ENCODE measurements at regions of chr19 and their contacts with region 1.

Region 1: DNA sequence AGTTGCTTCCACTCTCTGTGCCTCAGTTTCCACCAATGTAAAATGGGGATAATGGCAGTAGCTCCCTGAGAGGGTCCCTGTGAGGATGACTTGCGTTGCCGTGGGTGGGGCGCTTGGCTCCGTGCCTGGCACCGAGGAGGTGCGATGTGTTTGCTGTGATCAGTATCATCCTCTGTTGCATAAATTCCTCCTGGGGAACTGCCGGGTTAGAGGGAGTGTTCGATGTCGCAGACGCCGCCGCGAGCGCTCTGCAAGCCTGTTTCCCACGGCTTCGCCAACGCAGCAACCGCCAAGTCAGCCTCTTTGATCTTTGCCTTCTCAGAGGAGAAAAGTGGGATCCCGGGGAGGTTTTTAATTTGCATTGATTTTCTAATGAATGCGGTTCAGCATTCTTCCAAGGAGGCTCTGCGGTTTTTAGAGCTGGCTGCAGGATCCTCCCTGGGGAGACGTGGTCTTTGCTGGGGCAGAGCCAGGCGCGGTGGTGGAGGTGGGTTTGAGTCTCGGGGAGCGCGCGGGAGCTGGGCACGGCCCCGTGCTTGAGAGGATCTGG is 7.6 kb downstream of the GPR32 start:
- DNase-seq: no peak
- H3K4me3 Mint-ChIP-seq: no peak overlapping the region
- H3K27ac Mint-ChIP-seq: no peak overlapping the region
- H3K4me1 Mint-ChIP-seq: no peaks in the 10 kb centered on the region
- H3K27me3 Mint-ChIP-seq: peaks cover 50% of the 10 kb centered on the region

Region 2: DNA sequence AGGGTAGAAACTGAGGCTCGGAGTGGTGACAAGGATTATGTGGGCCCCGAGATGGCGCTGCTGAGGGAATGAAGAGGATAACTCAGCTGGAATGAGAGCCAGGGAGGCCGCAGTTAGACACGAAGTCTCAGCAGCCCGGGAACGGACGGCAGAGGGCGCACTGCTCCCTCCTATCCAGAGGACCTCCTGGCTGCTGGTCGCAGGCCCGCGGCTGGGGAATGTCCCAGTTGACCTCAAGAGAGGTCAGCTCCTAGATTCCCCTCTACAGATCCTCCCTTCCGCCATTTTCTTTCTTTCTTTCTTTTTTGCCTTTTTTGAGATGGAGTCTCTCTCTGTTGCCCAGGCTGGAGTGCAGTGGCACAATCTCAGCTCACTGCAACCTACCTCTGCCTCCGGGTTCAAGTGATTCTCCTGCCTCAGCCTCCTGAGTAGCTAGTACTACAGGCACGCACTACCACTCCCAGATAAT is 240.0 kb before region 1 on chr19:
- CTCF ChIA-PET with region 1: interaction called, 10 read pairs
- POLR2A ChIA-PET with region 1: no interaction called
- intact Hi-C with region 1: loop called (anchors 1 kb)
- DNase-seq: peak; percentile 80
- H3K4me3 Mint-ChIP-seq: no peak overlapping the region
- H3K27ac Mint-ChIP-seq: no peak overlapping the region
- H3K4me1 Mint-ChIP-seq: peaks cover 4% of the 10 kb centered on the region
- H3K27me3 Mint-ChIP-seq: peaks cover 12% of the 10 kb centered on the region

Region 3: GRCh38 chr19:50607874-50608785 is 169.7 kb before region 1 on chr19:
- CTCF ChIA-PET with region 1: no interaction called
- POLR2A ChIA-PET with region 1: no interaction called
- intact Hi-C with region 1: loop called (anchors 5 kb)
- DNase-seq: peak; percentile 89
- H3K4me3 Mint-ChIP-seq: no peak overlapping the region
- H3K27ac Mint-ChIP-seq: no peak overlapping the region
- H3K4me1 Mint-ChIP-seq: no peaks in the 10 kb centered on the region
- H3K27me3 Mint-ChIP-seq: peaks cover 28% of the 10 kb centered on the region

Region 4: GRCh38 chr19:50724522-50725217 is 53.2 kb before region 1 on chr19:
- CTCF ChIA-PET with region 1: interaction called, 10 read pairs
- POLR2A ChIA-PET with region 1: no interaction called
- intact Hi-C with region 1: no loop called
- DNase-seq: peak; percentile 97
- H3K4me3 Mint-ChIP-seq: peak overlapping the region; percentile 62
- H3K27ac Mint-ChIP-seq: no peak overlapping the region
- H3K4me1 Mint-ChIP-seq: peaks cover 22% of the 10 kb centered on the region
- H3K27me3 Mint-ChIP-seq: peaks cover 65% of the 10 kb centered on the region